GM10248 (cell line): ENCODE measurements at regions of chr2 and their contacts with region 1.

Region 1: GRCh38 chr2:26172871-26173775 is at the start of gene GAREM2:
- DNase-seq: no peak
- CTCF ChIP-seq: no peak

Region 2: DNA sequence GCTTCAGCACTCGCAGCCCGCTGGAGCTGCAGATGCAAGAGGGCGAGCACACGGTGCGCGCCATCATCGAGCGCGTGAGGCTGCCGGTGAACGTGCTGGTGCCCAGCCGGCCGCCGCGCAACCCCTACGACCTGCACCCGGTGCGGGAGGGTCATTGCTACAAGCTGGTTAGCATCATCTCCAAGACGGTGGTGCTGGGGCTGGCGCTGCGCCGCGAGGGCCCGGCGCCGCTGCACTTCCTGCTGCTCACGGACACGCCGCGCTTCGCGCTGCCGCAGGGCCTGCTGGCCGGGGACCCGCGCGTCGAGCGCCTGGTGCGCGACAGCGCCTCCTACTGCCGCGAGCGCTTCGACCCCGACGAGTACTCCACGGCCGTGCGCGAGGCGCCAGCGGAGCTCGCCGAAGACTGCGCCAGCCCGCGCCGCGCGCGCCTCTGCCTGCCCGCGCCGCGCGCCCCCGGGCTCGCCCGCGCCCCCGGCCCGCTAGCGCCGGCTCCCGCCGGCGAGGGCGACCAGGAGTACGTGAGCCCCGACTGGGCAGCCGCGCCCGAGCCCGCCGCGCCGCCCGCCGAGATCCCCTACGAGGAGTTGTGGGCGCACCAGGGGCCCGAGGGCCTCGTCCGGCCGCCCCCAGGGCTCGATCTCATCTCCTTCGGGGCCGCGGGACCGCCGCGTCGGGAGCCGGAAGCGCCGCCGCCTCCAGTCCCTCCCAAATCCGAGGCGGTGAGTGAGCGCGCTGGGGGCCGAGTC is 11.6 kb after region 1 on chr2:
- CTCF ChIA-PET with region 1: interaction called, 17 read pairs
- POLR2A ChIA-PET with region 1: no interaction called
- DNase-seq: peak; percentile 90
- CTCF ChIP-seq: peak; percentile 76